Activated naive CD4-positive, alpha-beta T cell treated with anti-CD3 and anti-CD28 coated beads for 36 hours (primary cell): ENCODE measurements at regions of chr3 and their contacts with region 1.

Region 1: DNA sequence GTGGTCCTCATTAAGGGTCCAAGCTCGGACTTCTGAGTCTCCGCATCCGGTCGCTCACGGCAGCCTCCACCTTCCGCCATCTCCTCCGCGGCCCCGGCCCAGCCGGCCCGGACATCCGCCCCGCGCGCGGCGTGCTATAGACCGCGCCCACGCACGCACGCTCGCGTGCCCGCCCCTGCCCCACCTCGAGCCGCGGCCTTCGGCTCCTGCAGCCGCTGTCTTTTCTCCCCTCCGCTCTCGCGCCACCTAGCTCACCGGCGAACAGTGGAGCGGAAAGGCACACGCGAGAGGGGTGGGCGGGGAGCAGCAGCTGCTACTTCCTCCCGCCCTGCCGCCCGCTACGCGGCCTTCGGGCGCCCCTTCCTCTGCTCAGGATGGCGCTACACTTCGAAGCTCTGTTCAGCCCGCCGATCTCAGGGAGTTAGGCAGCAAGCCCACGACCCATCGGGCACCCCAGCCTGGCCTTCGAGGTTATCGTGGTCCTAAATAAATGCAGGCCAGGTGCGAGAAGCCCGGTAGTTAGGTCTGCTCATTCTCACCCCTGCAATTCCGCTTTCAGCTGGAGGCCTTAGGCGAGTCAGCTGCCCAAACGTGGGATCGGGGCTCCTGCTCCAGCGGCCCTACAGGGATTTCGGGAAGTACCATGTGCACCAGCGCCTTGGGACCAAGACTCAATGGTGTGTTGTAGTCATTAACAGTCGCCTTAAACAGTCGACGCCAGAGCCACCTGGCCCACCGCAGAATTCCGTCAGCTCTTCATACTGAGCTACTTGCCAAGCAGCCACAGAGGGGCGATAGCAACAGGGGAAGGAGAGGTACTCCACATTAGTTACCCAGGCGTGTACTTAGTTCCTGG is at the start of gene USP4:
- DNase-seq: peak; percentile 96
- H3K4me3 Mint-ChIP-seq: peak within 1 kb of the TSS; percentile 91
- H3K27ac Mint-ChIP-seq: peak within 1 kb of the TSS; percentile 100
- H3K4me1 Mint-ChIP-seq: peaks cover 44% of the 10 kb centered on the region
- H3K27me3 Mint-ChIP-seq: no peaks in the 10 kb centered on the region
- total RNA-seq, gene USP4: 68.0 to 69.7 TPM

Region 2: DNA sequence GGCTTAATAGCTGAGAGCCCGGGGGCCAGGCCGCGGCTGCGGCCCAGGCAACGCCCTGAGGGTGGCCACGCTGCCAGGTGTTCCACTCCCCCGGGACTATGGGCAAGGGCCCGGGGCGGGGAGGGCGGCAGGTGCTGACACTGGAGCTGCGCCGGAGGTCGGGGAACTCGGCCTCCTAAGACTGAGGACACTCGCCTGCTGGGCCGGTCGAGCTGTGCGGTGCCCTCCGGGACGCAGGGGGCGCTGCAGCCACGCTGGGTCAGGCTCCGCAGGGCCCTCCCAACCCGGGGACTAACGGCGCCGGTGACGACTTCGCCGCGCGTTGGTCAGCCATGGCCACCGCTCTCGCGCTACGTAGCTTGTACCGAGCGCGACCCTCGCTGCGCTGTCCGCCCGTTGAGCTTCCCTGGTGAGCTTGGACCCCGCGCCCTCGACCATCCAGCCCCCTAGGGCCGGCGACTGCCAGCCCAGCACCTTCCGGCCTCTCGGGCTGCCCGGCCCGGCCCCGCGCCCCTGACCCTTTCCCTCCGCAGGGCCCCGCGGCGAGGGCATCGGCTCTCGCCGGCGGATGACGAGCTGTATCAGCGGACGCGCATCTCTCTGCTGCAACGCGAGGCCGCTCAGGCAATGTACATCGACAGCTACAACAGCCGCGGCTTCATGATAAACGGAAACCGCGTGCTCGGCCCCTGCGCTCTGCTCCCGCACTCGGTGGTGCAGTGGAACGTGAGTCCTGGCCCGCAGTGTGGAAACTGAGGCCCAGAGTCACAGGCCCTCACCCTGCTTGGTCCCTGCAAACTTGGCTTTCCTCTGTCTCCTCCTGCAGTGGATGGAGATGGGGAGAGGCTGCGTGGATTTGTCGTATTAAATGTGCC is 318.1 kb before region 1 on chr3 and contains the start of gene NDUFAF3:
- CTCF ChIA-PET with region 1: no interaction called
- intact Hi-C with region 1: loop called (anchors 5 kb)
- DNase-seq: peak; percentile 95
- H3K4me3 Mint-ChIP-seq: peak within 1 kb of the TSS; percentile 96
- H3K27ac Mint-ChIP-seq: peak within 1 kb of the TSS; percentile 97
- H3K4me1 Mint-ChIP-seq: peaks cover 60% of the 10 kb centered on the region
- H3K27me3 Mint-ChIP-seq: no peaks in the 10 kb centered on the region
- total RNA-seq, gene NDUFAF3: 113 to 115 TPM

Region 3: DNA sequence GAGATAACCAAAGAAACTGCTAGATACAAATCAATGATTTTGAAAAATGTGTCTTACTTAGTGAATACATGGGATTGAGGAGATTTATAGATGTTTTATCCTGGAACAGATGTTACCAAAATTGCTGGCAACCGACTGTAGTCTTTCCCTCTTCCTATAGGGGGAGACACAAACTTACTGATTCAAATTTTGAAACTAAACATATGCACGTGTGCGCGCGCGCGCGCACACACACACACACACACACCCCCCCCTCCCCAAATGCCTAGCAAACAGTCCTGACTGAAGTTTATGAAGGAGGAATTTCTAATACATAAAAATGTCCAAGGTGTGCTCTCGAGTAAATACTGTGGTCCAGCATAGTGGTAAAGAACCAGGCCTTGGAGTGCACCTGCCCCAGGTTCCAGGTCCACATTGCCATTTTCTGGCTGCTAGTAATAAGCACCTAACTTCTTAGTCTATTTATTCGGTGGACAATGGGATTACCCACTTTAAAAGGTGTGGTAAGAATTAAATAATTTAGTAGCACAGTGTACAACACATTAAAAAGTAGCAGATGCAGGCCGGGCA is 44.6 kb before region 1 on chr3:
- CTCF ChIA-PET with region 1: interaction called, 5 read pairs
- intact Hi-C with region 1: loop called (anchors 1 kb)
- DNase-seq: peak; percentile 51
- H3K4me3 Mint-ChIP-seq: no peak overlapping the region
- H3K27ac Mint-ChIP-seq: no peak overlapping the region
- H3K4me1 Mint-ChIP-seq: no peaks in the 10 kb centered on the region
- H3K27me3 Mint-ChIP-seq: no peaks in the 10 kb centered on the region

Region 4: DNA sequence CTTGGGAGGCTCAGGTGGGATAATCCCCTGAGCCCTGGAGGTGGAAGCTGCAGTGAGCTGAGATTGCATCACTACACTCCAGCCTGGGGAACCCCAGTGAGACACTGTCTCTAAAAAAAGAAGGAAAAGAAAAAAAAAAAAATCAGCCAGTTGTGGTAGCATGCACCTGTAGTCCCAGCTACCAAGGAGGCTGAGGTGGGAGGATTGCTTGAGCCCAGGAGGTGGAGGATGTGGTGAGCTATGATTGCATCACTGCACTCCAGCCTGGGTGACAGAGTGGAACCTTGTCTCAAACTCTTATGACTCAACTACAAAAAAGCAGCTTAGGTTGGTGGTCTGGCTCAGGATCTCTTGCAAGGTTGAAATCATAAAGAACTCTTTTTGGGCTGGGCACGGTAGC is 37.3 kb after region 1 on chr3:
- CTCF ChIA-PET with region 1: interaction called, 4 read pairs
- intact Hi-C with region 1: loop called (anchors 1 kb)
- DNase-seq: peak; percentile 89
- H3K4me3 Mint-ChIP-seq: no peak overlapping the region
- H3K27ac Mint-ChIP-seq: peak overlapping the region; percentile 87
- H3K4me1 Mint-ChIP-seq: peaks cover 43% of the 10 kb centered on the region
- H3K27me3 Mint-ChIP-seq: no peaks in the 10 kb centered on the region

Region 5: DNA sequence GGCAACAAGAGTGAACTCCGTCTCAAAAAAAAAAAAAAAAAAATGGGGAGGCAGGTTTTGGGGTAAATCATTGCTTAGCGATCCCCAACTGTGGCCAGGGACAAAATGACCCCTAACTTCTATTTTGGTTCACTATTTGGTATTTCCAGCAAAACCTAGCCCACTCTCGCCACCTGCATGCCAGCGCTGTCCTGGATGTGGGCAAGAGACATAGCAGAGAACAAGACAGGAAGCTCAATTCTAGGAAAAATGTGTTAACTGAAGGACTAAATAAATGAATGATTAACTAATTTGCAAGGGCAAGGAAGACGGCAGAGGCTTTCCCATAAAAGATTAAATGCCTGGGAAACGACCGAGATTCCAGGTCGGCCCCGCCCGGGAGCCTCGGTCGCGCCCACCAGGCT is 88.5 kb after region 1 on chr3:
- CTCF ChIA-PET with region 1: interaction called, 6 read pairs
- intact Hi-C with region 1: loop called (anchors 1 kb)
- DNase-seq: no peak
- H3K4me3 Mint-ChIP-seq: peak overlapping the region; percentile 90
- H3K27ac Mint-ChIP-seq: peak overlapping the region; percentile 93
- H3K4me1 Mint-ChIP-seq: peaks cover 12% of the 10 kb centered on the region
- H3K27me3 Mint-ChIP-seq: no peaks in the 10 kb centered on the region

Region 6: GRCh38 chr3:49454458-49454857 is 114.3 kb after region 1 on chr3:
- CTCF ChIA-PET with region 1: interaction called, 35 read pairs
- intact Hi-C with region 1: loop called (anchors 1 kb)
- DNase-seq: peak; percentile 30
- H3K4me3 Mint-ChIP-seq: no peak overlapping the region
- H3K27ac Mint-ChIP-seq: no peak overlapping the region
- H3K4me1 Mint-ChIP-seq: no peaks in the 10 kb centered on the region
- H3K27me3 Mint-ChIP-seq: no peaks in the 10 kb centered on the region